K562 (cell line): ENCODE measurements at regions of chr3 and their contacts with region 1.

Region 1: DNA sequence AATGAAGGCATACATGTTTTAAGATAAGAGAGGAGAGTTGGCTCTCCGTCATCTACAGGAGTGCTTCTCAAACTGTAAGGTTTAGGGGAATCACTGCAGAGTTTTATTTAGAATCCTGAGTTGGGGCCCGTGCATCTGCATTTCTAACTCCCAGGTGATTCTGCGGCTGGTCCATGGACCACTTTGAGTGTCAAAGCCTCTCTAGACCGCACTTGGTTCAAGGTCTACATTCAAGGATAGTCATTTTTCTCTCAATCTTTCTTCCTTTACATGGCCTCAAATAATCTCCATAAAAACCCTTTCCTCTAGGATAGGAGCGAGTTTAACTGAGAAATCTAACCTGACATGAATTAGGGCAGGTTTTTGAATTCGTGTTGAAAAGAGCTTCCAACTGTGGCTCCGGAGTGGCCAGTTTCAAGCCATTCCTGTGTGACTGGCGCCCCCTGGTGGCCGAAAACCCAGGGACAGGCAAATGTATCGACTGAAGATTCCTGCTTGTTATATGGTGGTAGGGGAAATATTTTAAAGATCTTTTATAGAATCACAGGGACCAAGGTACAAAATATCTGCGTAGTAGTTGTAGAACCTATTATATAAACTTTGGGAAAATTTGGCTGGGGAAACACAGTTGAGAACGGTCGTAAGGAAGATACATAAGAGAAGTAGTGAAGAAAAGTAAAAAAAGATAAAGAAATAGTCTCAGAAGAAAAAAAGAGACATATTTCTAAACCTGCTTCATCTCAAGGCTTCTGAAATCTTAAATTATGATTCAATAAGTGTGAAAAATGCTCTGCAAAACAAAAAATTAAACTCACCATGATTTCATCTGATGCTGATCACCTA is 11.9 kb downstream of the GABRR3 start:
- DNase-seq: peak; percentile 43 to 76 (median 50)
- ATAC-seq: peak; percentile 84
- H3K4me3 ChIP-seq: no peak overlapping the region
- H3K27ac ChIP-seq: no peak overlapping the region
- H3K4me1 ChIP-seq: no peaks in the 10 kb centered on the region
- H3K27me3 ChIP-seq: no peaks in the 10 kb centered on the region
- CTCF ChIP-seq: peak; percentile 75 to 78 (median 76)
- EP300 ChIP-seq: no peak
- POLR2A ChIP-seq: no peak
- RAD21 ChIP-seq: peak; percentile 83 to 87

Region 2: DNA sequence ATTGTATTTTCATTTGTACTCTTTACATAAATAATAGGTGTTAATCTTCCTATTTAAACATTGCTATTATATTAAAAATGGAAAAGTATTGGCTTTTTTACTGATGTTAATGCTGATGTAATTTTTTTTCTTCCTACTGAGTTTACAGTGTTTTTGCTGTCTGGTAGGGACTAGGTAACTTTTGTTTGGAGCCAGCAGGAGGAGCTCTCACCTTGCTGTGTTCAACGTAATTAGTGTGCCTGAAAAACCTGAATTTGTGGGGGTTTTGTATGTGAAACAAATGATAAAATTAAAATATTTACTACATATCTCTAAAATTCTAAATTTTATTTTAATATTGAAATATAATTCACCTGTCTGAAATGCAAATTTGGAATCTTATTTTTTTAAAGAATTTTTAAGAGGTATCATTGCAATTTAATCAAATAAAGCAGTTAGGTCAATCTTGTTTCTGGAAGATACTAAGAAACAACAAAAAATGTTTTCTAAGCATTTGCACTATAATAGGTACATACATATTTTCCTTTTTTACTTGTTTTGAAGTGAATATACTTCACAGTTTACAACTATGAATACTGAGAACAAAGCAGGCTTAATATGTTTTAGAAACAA is 1160.0 kb before region 1 on chr3:
- CTCF ChIA-PET with region 1: no interaction called
- POLR2A ChIA-PET with region 1: no interaction called
- in situ Hi-C with region 1: no loop called
- intact Hi-C with region 1: loop called (anchors 10 kb)
- DNase-seq: peak in 3 of 4 experiments; percentile 1 to 6 (median 4)
- ATAC-seq: no peak
- H3K4me3 ChIP-seq: no peak overlapping the region
- H3K27ac ChIP-seq: no peak overlapping the region
- H3K4me1 ChIP-seq: no peaks in the 10 kb centered on the region
- H3K27me3 ChIP-seq: no peaks in the 10 kb centered on the region
- CTCF ChIP-seq: peak in 2 of 3 experiments; percentile 33 to 36; a peak in 2 of 6 replicates
- EP300 ChIP-seq: no peak
- POLR2A ChIP-seq: no peak
- RAD21 ChIP-seq: peak; percentile 22 to 36; a peak in 3 of 4 replicates

Region 3: GRCh38 chr3:97719156-97719821 is 303.9 kb before region 1 on chr3:
- CTCF ChIA-PET with region 1: no interaction called
- POLR2A ChIA-PET with region 1: no interaction called
- in situ Hi-C with region 1: no loop called
- intact Hi-C with region 1: loop called (anchors 2 kb)
- DNase-seq: peak; percentile 30 to 66 (median 32)
- ATAC-seq: peak; percentile 81
- H3K4me3 ChIP-seq: no peak overlapping the region
- H3K27ac ChIP-seq: no peak overlapping the region
- H3K4me1 ChIP-seq: no peaks in the 10 kb centered on the region
- H3K27me3 ChIP-seq: no peaks in the 10 kb centered on the region
- CTCF ChIP-seq: peak; percentile 59 to 71 (median 67)
- EP300 ChIP-seq: no peak
- POLR2A ChIP-seq: no peak
- RAD21 ChIP-seq: peak; percentile 49 to 62

Region 4: DNA sequence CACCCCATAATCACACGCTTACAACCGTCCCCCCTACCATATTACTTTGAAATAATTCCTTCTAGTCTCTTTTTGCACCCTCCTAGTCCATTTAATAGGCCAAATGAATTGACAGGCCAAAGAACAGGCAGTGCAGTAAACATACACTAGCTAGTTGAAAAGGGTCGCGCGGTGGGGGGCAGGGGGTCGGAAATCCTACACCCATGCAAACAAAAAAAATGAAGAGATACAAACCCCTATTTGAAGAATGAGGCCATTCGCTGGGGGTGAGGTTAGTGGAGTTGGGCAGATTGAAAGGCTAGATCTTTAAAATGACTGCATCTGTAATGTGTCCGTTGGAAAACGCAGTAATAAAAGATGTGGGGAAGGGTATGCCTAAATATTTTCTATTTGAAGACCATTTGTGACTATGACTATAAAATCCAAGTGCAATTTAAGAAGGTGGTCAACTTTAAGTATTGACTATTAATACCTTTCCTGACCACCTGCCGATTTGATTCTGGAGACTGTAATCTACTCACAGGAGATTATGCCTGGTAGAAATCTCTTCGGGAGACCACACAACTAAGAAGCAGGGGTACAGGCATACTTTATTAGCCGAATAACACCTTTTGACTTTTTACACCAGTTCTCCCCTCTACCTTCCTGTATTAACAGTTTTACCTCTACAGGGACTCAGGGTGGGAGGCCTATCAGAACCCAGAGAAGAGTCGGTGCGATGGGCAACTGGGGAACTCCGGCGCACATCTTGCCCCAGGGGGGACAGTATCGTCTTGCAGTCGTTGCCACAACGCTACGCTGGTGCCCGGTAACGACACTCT is 259.4 kb before region 1 on chr3:
- CTCF ChIA-PET with region 1: no interaction called
- POLR2A ChIA-PET with region 1: no interaction called
- in situ Hi-C with region 1: no loop called
- intact Hi-C with region 1: no loop called
- DNase-seq: peak in 2 of 4 experiments; percentile 1 to 2
- ATAC-seq: peak; percentile 79
- H3K4me3 ChIP-seq: peak overlapping the region; percentile 81
- H3K27ac ChIP-seq: peak overlapping the region; percentile 53; the same call in 1 of the 3 replicates
- H3K4me1 ChIP-seq: peaks cover 0 to 4% of the 10 kb centered on the region in 2 experiments; a peak in 1 of 5 replicates
- H3K27me3 ChIP-seq: no peaks in the 10 kb centered on the region
- CTCF ChIP-seq: no peak
- EP300 ChIP-seq: no peak
- POLR2A ChIP-seq: peak; percentile 54; the same call in 1 of the 2 replicates
- RAD21 ChIP-seq: no peak

Region 5: DNA sequence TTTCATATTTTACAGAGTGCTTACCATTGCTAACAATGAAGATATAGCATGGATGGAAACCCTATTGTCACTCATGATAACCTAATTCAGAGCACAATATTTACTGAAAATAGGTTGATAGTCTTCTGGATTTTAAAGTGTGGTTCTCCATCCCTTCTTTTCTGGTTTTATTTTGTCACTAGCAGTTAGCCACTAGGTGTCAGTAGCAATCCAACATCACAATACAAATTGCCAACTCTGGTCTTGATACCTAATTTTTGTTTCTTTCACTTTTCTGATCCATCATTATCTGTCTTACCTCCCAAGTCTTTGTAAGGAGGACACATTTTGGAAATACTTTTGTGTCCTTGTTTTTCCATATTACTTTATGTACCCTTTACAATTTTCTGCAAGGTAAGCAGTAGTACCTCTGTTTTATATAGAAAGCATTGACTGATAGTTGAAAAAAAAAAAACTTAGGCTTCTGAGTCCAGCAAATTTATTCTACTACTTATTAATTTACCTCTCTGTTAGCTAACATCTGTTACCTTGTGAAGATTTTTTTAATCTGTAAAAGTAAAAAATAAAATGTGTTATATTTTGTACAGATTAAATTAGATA is 229.7 kb before region 1 on chr3:
- CTCF ChIA-PET with region 1: interaction called, 11 read pairs
- POLR2A ChIA-PET with region 1: no interaction called
- in situ Hi-C with region 1: loop called (anchors 5 kb)
- intact Hi-C with region 1: loop called (anchors 1 kb)
- DNase-seq: peak in 3 of 4 experiments; percentile 5 to 53 (median 7)
- ATAC-seq: 0 out of 3 replicates have a peak, but pooled peaks have one; percentile 42
- H3K4me3 ChIP-seq: no peak overlapping the region
- H3K27ac ChIP-seq: no peak overlapping the region
- H3K4me1 ChIP-seq: no peaks in the 10 kb centered on the region
- H3K27me3 ChIP-seq: no peaks in the 10 kb centered on the region
- CTCF ChIP-seq: peak; percentile 40 to 71 (median 53); a peak in 5 of 6 replicates
- EP300 ChIP-seq: no peak
- POLR2A ChIP-seq: no peak
- RAD21 ChIP-seq: peak; percentile 71 to 89

Region 6: DNA sequence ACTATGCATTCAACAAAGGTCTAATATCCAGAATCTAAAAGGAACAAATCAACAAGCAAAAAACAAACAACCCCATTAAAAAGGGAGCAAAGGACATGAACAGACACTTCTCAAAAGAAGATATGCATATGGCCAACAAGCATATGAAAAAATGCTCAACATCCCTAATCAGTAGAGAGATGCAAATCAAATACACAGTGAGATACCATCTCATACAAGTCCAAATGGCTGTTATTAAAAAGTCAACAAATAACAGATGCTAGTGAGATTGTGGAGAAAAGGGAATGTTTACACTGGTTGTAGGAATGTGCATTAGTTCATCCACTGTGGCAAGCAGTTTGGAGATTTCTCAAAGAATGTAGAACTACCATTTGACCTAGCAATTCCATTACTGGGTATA is 95.5 kb before region 1 on chr3:
- CTCF ChIA-PET with region 1: no interaction called
- POLR2A ChIA-PET with region 1: no interaction called
- in situ Hi-C with region 1: no loop called
- intact Hi-C with region 1: no loop called
- DNase-seq: no peak
- ATAC-seq: no peak
- H3K4me3 ChIP-seq: no peak overlapping the region
- H3K27ac ChIP-seq: no peak overlapping the region
- H3K4me1 ChIP-seq: peaks cover 0 to 12% of the 10 kb centered on the region in 2 experiments; a peak in 2 of 5 replicates
- H3K27me3 ChIP-seq: no peaks in the 10 kb centered on the region
- CTCF ChIP-seq: no peak
- EP300 ChIP-seq: no peak
- POLR2A ChIP-seq: no peak
- RAD21 ChIP-seq: no peak

Region 7: DNA sequence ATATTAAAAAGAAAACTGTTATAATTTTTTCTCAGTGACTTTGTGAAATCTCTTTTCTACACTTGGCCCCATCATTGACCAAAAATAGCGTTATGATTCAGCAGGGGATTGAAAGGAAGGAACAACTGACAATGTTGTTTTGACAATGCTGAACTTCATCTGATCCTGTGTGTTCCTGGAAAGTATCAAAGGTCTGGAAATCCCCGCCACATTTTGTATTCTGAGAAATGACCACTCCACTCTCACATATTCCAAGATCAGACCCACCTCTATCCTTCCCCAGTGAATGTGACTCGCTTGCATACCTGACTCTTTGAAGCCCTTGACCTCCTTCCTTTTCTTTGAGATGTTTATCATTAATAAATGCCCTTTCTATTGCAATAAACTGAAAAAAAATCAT is 41.3 kb before region 1 on chr3:
- CTCF ChIA-PET with region 1: no interaction called
- POLR2A ChIA-PET with region 1: no interaction called
- in situ Hi-C with region 1: no loop called
- intact Hi-C with region 1: loop called (anchors 5 kb)
- DNase-seq: no peak
- ATAC-seq: no peak
- H3K4me3 ChIP-seq: no peak overlapping the region
- H3K27ac ChIP-seq: no peak overlapping the region
- H3K4me1 ChIP-seq: no peaks in the 10 kb centered on the region; a peak in 1 of 5 replicates
- H3K27me3 ChIP-seq: no peaks in the 10 kb centered on the region
- CTCF ChIP-seq: no peak
- EP300 ChIP-seq: no peak
- POLR2A ChIP-seq: no peak
- RAD21 ChIP-seq: no peak

Region 8: GRCh38 chr3:98039322-98040024 is 16.3 kb after region 1 on chr3:
- CTCF ChIA-PET with region 1: no interaction called
- POLR2A ChIA-PET with region 1: no interaction called
- in situ Hi-C with region 1: no loop called
- intact Hi-C with region 1: no loop called
- DNase-seq: peak; percentile 20 to 65 (median 47)
- ATAC-seq: peak; percentile 87
- H3K4me3 ChIP-seq: no peak overlapping the region
- H3K27ac ChIP-seq: no peak overlapping the region
- H3K4me1 ChIP-seq: no peaks in the 10 kb centered on the region
- H3K27me3 ChIP-seq: no peaks in the 10 kb centered on the region
- CTCF ChIP-seq: peak; percentile 55 to 72 (median 56)
- EP300 ChIP-seq: no peak
- POLR2A ChIP-seq: no peak
- RAD21 ChIP-seq: peak; percentile 59 to 73